Mammary epithelial cell (primary cell): ENCODE measurements at regions of chr9 and their contacts with region 1.

Region 1: GRCh38 chr9:22119537-22120158 is 110.5 kb upstream of the CDKN2B start:
- DNase-seq: peak; percentile 59
- H3K4me3 ChIP-seq: no peak overlapping the region
- H3K27ac ChIP-seq: no peak overlapping the region
- H3K4me1 ChIP-seq: peaks cover 28% of the 10 kb centered on the region
- H3K27me3 ChIP-seq: no peaks in the 10 kb centered on the region
- CTCF ChIP-seq: peak; percentile 65 to 71

Region 2: GRCh38 chr9:21995177-21996086 is 124.2 kb before region 1 on chr9:
- CTCF ChIA-PET with region 1: no interaction called
- dilution Hi-C with region 1: no loop called
- in situ Hi-C with region 1: no loop called
- intact Hi-C with region 1: loop called (anchors 1 kb)
- DNase-seq: peak; percentile 80
- H3K4me3 ChIP-seq: peak overlapping the region; percentile 71 to 98 (median 94)
- H3K27ac ChIP-seq: peak overlapping the region; percentile 96
- H3K4me1 ChIP-seq: peaks cover 19% of the 10 kb centered on the region
- H3K27me3 ChIP-seq: no peaks in the 10 kb centered on the region
- CTCF ChIP-seq: peak in 1 of 2 donors; percentile 46

Region 3: GRCh38 chr9:22008736-22009562 is 110.7 kb before region 1 on chr9 and contains the start of gene CDKN2B:
- CTCF ChIA-PET with region 1: interaction called, 7 read pairs
- dilution Hi-C with region 1: no loop called
- in situ Hi-C with region 1: no loop called
- intact Hi-C with region 1: loop called (anchors 1 kb)
- DNase-seq: peak; percentile 97
- H3K4me3 ChIP-seq: peak within 1 kb of the TSS; percentile 95 to 98 (median 96)
- H3K27ac ChIP-seq: peak within 1 kb of the TSS; percentile 88
- H3K4me1 ChIP-seq: peaks cover 12% of the 10 kb centered on the region
- H3K27me3 ChIP-seq: no peaks in the 10 kb centered on the region
- CTCF ChIP-seq: peak; percentile 63 to 97
- total RNA-seq, gene CDKN2B: 27.6 to 50.0 TPM

Region 4: DNA sequence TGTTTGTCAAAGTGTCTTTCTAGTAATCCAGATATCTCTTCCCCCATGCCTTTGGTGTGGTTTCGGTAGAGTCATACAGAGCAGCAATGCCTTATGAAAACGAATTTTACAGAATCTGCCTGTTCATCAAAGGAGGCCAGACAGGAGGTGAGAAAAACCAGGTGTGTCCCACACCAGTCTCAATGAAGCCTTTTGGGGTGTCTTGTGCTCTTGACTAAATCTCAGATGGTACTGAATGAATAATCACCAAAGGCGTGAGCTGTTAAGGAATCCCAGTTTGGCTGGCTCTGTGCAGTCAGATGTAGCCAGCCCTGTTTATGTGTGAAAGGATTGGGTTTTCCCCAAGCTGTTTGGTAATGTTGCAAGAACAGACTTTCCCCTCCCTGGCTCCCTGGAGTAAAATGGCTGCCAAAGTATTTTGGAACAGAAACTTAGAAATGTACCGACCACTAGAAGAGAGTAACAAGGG is 39.7 kb before region 1 on chr9:
- CTCF ChIA-PET with region 1: interaction called, 3 read pairs
- dilution Hi-C with region 1: no loop called
- in situ Hi-C with region 1: no loop called
- intact Hi-C with region 1: loop called (anchors 1 kb)
- DNase-seq: peak; percentile 93
- H3K4me3 ChIP-seq: no peak overlapping the region
- H3K27ac ChIP-seq: peak overlapping the region; percentile 39
- H3K4me1 ChIP-seq: peaks cover 25% of the 10 kb centered on the region
- H3K27me3 ChIP-seq: no peaks in the 10 kb centered on the region
- CTCF ChIP-seq: no peak

Region 5: DNA sequence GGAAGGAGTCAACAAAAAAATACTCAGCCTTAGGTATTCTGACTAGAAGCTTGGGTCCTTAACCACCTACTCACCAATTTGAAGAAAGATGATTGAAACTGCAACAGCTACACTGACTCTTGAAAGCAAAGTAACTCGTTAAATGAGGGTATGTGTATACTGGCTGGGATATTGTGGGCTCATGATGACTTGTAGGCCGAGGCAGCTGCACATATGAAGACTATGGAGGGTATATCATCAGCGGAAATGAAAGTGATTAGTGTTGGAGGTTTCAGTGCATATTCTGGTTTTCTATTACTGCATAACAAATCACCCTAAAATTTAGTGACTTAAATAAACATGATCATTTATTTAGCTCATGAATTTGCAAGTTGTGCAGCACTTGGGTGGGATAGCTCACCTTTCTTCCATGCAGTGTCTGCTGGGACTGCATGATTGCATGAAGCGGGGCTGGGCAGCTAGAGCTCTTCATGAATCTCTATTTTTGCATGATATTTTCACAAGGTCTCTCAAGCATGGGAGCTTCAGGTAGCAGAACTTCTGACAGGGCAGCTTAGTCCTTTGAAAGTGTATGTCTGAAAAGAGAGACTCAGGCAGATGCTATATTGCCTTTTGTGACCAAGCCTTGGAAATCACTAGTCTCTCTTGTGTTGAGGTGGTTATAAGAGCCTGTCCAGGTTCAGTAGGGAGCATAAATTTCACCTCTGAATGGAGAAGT is 14.5 kb before region 1 on chr9:
- CTCF ChIA-PET with region 1: interaction called, 3 read pairs
- dilution Hi-C with region 1: no loop called
- in situ Hi-C with region 1: no loop called
- intact Hi-C with region 1: loop called (anchors 1 kb)
- DNase-seq: no peak
- H3K4me3 ChIP-seq: no peak overlapping the region
- H3K27ac ChIP-seq: no peak overlapping the region
- H3K4me1 ChIP-seq: peaks cover 44% of the 10 kb centered on the region
- H3K27me3 ChIP-seq: no peaks in the 10 kb centered on the region
- CTCF ChIP-seq: no peak

Region 6: GRCh38 chr9:22238809-22239684 is 119.4 kb after region 1 on chr9:
- CTCF ChIA-PET with region 1: no interaction called
- dilution Hi-C with region 1: no loop called
- in situ Hi-C with region 1: loop called in 1 of 2 experiments (anchors 10 kb)
- intact Hi-C with region 1: loop called (anchors 1 kb)
- DNase-seq: peak; percentile 71
- H3K4me3 ChIP-seq: peak overlapping the region in 2 of 3 experiments; percentile 15 to 34
- H3K27ac ChIP-seq: peak overlapping the region; percentile 87
- H3K4me1 ChIP-seq: peaks cover 45% of the 10 kb centered on the region
- H3K27me3 ChIP-seq: no peaks in the 10 kb centered on the region
- CTCF ChIP-seq: peak; percentile 39 to 60